HEK293 (cell line): ENCODE measurements at regions of chr11 and their contacts with region 1.

Region 1: GRCh38 chr11:126480410-126481302 is 125.2 kb downstream of the ST3GAL4 start:
- H3K4me3 ChIP-seq: no peak overlapping the region
- H3K27ac ChIP-seq: no peak overlapping the region; the same call in 1 of the 2 replicates
- H3K4me1 ChIP-seq: no peaks in the 10 kb centered on the region
- CTCF ChIP-seq: peak; percentile 73

Region 2: GRCh38 chr11:126310228-126310991 is 170.2 kb before region 1 on chr11:
- CTCF ChIA-PET with region 1: interaction called, 69 read pairs
- POLR2A ChIA-PET with region 1: no interaction called
- H3K4me3 ChIP-seq: no peak overlapping the region
- H3K27ac ChIP-seq: no peak overlapping the region
- H3K4me1 ChIP-seq: no peaks in the 10 kb centered on the region
- CTCF ChIP-seq: peak; percentile 49; the same call in 1 of the 2 replicates

Region 3: DNA sequence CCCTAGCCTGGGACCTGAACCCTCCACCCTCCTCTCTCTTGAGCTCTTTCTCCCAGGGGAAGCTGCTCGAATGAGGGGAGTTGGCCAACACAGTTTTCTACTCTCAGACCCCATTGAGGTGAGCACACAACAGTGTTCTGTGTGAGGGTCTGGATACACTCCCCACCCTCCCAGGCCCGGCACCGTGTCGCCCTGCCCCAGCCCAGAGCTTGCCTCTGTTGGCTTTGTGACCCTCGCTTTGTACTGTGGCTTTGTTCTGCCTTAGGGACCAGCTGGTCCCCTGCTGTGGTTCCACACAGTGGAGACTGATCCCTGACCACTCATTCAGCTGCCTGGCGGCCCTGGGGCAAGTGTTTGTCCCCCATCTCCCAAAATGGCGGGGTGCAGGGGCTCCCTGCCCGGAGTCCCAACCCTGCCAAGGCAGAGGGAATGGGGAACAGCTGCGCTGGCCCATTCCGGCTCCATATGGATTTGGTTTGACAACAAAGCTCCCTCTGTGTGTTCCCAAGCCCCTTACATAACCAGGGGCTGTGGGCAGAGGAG is 116.9 kb before region 1 on chr11:
- CTCF ChIA-PET with region 1: no interaction called
- POLR2A ChIA-PET with region 1: no interaction called
- H3K4me3 ChIP-seq: no peak overlapping the region
- H3K27ac ChIP-seq: no peak overlapping the region
- H3K4me1 ChIP-seq: no peaks in the 10 kb centered on the region
- CTCF ChIP-seq: no peak

Region 4: GRCh38 chr11:126440792-126441514 is 39.7 kb before region 1 on chr11:
- CTCF ChIA-PET with region 1: interaction called, 31 read pairs
- POLR2A ChIA-PET with region 1: no interaction called
- H3K4me3 ChIP-seq: no peak overlapping the region
- H3K27ac ChIP-seq: no peak overlapping the region
- H3K4me1 ChIP-seq: no peaks in the 10 kb centered on the region
- CTCF ChIP-seq: peak; percentile 71

Region 5: GRCh38 chr11:126468102-126468521 is 12.5 kb before region 1 on chr11:
- CTCF ChIA-PET with region 1: interaction called, 23 read pairs
- POLR2A ChIA-PET with region 1: no interaction called
- H3K4me3 ChIP-seq: no peak overlapping the region
- H3K27ac ChIP-seq: no peak overlapping the region
- H3K4me1 ChIP-seq: no peaks in the 10 kb centered on the region
- CTCF ChIP-seq: no peak

Region 6: GRCh38 chr11:126496576-126497337 is 16.1 kb after region 1 on chr11:
- CTCF ChIA-PET with region 1: interaction called, 16 read pairs
- POLR2A ChIA-PET with region 1: no interaction called
- H3K4me3 ChIP-seq: no peak overlapping the region
- H3K27ac ChIP-seq: no peak overlapping the region
- H3K4me1 ChIP-seq: no peaks in the 10 kb centered on the region
- CTCF ChIP-seq: no peak

Region 7: GRCh38 chr11:126502159-126502558 is 21.5 kb after region 1 on chr11:
- CTCF ChIA-PET with region 1: interaction called, 16 read pairs
- POLR2A ChIA-PET with region 1: no interaction called
- H3K4me3 ChIP-seq: no peak overlapping the region
- H3K27ac ChIP-seq: no peak overlapping the region
- H3K4me1 ChIP-seq: no peaks in the 10 kb centered on the region
- CTCF ChIP-seq: no peak